ENCODE measurements at regions of chr1 and their contacts with region 1.

Region 1: GRCh38 chr1:155084722-155085503 is 6.3 kb downstream of the EFNA3 start:
- DNase-seq: peak; percentile 89
- H3K4me3 Mint-ChIP-seq: peak overlapping the region; percentile 88
- H3K27ac Mint-ChIP-seq: peak overlapping the region; percentile 94
- H3K4me1 Mint-ChIP-seq: peaks cover 34% of the 10 kb centered on the region
- H3K27me3 Mint-ChIP-seq: peaks cover 31% of the 10 kb centered on the region

Region 2: GRCh38 chr1:154479764-154480421 is 605.0 kb before region 1 on chr1:
- intact Hi-C with region 1: loop called (anchors 10 kb)
- DNase-seq: peak; percentile 59
- H3K4me3 Mint-ChIP-seq: no peak overlapping the region
- H3K27ac Mint-ChIP-seq: no peak overlapping the region
- H3K4me1 Mint-ChIP-seq: peaks cover 14% of the 10 kb centered on the region
- H3K27me3 Mint-ChIP-seq: peaks cover 7% of the 10 kb centered on the region

Region 3: DNA sequence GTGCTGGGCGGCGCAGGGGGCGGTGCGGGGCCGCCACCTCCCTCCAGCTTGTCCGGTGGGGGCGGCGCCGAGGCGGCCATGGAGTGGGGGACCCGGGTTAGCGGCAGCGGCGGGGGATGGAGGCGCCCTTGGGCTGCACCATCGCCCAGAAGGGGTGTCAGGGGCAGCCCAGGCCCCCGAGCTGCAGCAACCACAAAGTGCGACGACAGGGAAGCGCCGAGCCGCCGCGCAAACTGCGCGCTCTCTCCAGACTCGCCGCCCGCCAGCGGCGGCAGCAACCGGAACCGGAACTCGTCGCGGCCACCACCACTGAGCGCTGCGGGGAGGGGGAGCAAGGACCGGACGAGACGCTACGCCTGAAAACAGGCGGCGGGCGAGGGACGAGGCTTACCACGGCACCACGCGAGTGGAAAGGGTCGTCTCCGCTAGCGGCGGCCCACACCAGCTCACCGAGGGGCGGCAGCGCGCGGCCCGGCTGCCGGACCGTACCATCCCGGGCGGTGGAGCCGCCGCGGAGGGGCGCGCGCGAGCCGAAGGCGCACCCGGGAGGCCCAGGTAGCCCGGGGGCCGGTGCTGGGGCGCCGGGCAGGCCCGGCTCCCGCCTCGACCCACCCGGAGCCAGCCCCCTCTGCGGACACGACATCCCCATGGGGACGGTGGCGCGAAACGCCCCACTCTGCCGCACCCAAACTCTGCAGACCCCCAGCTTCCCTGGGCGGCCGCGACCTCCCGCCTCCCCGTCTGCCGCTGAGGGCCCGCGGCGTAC is 123.2 kb before region 1 on chr1 and contains the start of gene PYGO2:
- intact Hi-C with region 1: loop called (anchors 1 kb)
- DNase-seq: peak; percentile 82
- H3K4me3 Mint-ChIP-seq: peak within 1 kb of the TSS; percentile 96
- H3K27ac Mint-ChIP-seq: peak within 1 kb of the TSS; percentile 93
- H3K4me1 Mint-ChIP-seq: peaks cover 36% of the 10 kb centered on the region
- H3K27me3 Mint-ChIP-seq: peaks cover 2% of the 10 kb centered on the region
- total RNA-seq, gene PYGO2: 34.7 and 35.0 TPM in 2 replicates

Region 4: DNA sequence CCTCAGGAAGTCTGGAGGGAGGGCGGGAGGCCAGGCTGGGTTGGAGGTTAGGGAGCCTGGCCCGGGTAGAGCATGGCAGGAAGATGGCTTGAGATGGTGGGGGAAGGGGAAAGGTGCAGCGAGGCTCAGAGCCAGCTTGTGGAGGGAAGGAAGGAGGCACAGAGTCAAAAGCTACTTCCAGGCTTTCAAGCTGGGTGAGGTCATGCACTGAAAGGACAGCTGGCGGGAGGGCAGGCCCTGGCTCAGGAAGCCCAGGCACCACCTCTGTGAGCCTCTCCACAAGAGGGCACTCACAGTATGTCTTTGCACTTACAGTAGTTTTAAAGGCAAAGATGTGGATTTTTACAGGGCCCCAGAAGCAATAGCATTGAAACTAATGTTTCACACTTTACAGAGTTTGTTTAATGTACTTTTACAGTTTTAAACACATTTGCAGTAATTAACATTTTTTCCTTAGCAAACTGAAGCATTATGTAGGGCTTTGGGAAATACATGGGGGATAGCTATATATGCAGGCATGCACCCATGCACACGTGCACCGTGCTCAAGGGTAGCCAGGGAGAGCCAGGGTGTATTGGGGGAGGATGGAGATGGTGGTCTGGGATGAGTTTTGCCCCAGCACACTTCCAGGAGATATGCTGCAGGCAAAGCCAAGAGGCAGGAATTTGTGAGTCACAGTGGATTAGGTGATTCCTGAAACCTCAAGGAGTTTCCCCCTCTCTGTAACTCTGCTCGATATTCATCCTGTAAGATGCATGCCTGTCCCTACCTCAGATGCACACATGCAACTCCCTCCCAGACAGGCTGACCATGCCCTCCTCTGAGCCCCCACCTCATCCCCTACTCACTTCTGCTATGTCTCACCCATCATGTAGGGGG is 39.9 kb before region 1 on chr1:
- intact Hi-C with region 1: loop called (anchors 1 kb)
- DNase-seq: peak; percentile 59
- H3K4me3 Mint-ChIP-seq: no peak overlapping the region
- H3K27ac Mint-ChIP-seq: no peak overlapping the region
- H3K4me1 Mint-ChIP-seq: peaks cover 22% of the 10 kb centered on the region
- H3K27me3 Mint-ChIP-seq: peaks cover 8% of the 10 kb centered on the region

Region 5: DNA sequence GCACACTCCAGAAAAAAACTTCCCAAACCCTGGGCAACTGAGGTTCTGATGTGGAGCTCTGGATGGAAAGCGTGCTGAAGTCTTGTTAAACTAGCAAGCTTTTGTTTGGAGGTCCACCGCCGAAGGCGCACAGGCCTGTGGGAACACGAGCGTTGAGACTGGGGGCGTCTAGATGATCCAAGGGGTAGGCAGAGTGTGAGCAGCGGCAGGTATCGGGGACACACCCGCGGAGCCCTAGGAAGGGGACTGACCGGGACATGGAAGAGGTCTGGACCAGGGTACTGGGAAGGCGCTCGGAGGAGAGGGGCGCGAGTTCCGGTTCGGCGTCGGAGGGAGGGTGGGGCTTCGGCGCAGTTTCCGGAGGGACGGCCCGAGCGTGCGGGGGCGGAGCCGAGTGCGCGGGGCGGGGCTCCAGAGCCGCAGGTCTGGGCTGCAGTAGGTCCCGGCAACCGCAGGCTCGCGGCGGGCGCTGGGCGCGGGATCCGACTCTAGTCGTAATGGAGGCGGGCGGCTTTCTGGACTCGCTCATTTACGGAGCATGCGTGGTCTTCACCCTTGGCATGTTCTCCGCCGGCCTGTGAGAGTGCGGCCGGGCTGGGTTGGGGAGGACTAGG is 50.6 kb after region 1 on chr1 and contains the start of gene SLC50A1:
- intact Hi-C with region 1: loop called (anchors 1 kb)
- DNase-seq: peak; percentile 91
- H3K4me3 Mint-ChIP-seq: peak within 1 kb of the TSS; percentile 94
- H3K27ac Mint-ChIP-seq: peak within 1 kb of the TSS; percentile 99
- H3K4me1 Mint-ChIP-seq: peaks cover 42% of the 10 kb centered on the region
- H3K27me3 Mint-ChIP-seq: peaks cover 5% of the 10 kb centered on the region
- total RNA-seq, gene SLC50A1: 45.7 and 47.7 TPM in 2 replicates

Region 6: GRCh38 chr1:155172732-155173477 is 88.0 kb after region 1 on chr1 and contains the start of gene KRTCAP2:
- intact Hi-C with region 1: loop called (anchors 1 kb)
- DNase-seq: peak; percentile 94
- H3K4me3 Mint-ChIP-seq: peak within 1 kb of the TSS; percentile 96
- H3K27ac Mint-ChIP-seq: peak within 1 kb of the TSS; percentile 97
- H3K4me1 Mint-ChIP-seq: peaks cover 49% of the 10 kb centered on the region
- H3K27me3 Mint-ChIP-seq: no peaks in the 10 kb centered on the region
- total RNA-seq, gene KRTCAP2: 230 and 238 TPM in 2 replicates